Endothelial cell of umbilical vein (primary cell): ENCODE measurements at regions of chr3 and their contacts with region 1.

Region 1: DNA sequence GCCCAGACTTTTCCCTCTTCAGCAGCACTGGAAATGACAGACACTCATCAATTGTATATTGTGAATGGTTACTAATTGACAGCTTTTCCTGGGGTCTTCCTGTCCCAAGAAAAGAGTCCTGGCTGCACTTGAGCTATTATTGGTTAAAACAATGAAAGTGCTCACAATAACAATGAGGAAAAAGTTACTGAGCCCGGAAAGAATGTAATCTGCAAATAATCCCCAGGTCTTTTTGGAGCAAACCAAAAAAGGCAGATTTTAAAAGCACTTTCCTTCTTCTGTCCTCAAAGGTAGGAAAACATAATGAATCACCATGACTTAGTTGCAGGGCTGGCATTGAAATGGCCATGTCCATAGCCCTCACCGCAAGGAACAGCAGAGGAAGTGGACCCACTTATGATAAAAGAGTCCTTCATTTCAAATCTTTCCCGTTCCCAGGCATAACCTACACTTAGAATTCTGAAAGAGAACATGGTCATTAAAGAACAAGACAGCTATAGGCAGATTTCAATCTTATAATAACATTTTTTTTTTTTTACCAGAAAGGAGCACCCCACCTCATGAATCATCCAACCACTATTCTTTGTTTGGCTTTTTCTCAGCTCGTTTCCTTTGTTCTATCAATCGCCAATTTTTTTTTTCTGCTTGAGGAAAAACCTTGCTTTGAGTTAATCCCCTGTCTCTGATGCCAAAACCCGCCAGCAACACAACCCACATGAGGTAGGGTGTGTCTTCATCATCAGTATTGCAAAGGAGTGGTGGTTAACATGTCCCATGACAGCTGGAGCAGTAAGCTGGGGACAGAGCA is 35.5 kb upstream of the ATP1B3 start:
- DNase-seq: peak; percentile 84
- H3K4me3 ChIP-seq: peak overlapping the region in 1 of 3 experiments; percentile 9
- H3K27ac ChIP-seq: peak overlapping the region; percentile 80
- H3K4me1 ChIP-seq: peaks cover 21% of the 10 kb centered on the region
- H3K27me3 ChIP-seq: no peaks in the 10 kb centered on the region
- CTCF ChIP-seq: no peak
- POLR2A ChIP-seq: no peak

Region 2: GRCh38 chr3:141851411-141851810 is 10.5 kb after region 1 on chr3:
- CTCF ChIA-PET with region 1: interaction called, 10 read pairs
- POLR2A ChIA-PET with region 1: interaction called, 3 read pairs
- dilution Hi-C with region 1: no loop called
- intact Hi-C with region 1: loop called (anchors 1 kb)
- DNase-seq: peak; percentile 87
- H3K4me3 ChIP-seq: no peak overlapping the region
- H3K27ac ChIP-seq: no peak overlapping the region
- H3K4me1 ChIP-seq: peaks cover 9% of the 10 kb centered on the region
- H3K27me3 ChIP-seq: no peaks in the 10 kb centered on the region
- CTCF ChIP-seq: no peak
- POLR2A ChIP-seq: no peak